Esophagus squamous epithelium (tissue), 5 donors: ENCODE measurements at regions of chr6 and their contacts with region 1.

Region 1: DNA sequence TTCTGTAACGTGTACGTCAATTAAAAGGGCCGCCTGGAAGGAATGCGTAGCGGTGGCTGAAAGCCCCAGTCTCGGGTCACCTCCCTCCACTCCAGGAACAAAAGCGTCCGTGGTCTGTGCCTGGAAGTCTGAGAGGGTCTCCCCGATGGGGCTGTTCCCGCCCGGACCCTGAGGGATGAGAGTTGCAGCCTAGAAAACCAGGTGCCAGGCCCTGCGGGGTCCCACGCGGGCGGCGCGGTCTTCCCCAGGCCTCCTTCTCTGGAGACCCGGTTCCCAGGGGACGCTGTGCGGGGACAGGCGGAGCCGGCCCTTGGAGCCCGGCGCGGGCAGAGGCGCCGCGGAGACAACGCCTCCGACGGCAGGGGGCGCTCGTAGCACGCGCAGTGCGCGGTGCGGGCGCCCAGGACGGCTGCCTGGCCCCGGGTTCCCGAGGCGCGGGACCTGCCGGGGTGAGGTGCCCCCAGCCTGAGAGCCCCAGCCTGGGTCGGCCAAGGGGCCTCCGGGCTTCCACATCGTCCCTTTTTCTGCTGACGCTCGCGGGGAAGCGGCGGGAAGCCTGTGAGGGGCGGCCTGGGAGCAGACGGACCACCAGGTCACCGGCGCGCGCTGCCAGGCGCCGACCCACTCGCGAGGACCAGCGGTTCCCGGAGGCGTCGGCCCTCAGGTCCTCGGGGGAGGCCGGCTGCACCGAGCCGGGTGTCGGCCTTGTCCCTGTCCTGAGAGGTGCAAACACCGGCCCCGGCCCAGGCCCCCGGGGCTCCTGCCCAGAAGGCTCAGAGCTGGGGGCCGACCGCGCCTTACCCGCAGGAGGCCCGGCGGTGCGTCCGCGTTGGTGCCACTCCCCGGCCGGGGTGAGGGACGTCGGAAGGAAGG is 5.3 kb upstream of the FOXC1 start:
- DNase-seq: no peak
- H3K4me3 ChIP-seq: peak overlapping the region; percentile 37 to 72 (median 49)
- H3K27ac ChIP-seq: peak overlapping the region in 2 of 4 donors; percentile 0 to 21
- H3K4me1 ChIP-seq: peaks cover 30 to 59% (median 32%) of the 10 kb centered on the region in 3 donors
- H3K27me3 ChIP-seq: peaks cover 12 to 97% (median 34%) of the 10 kb centered on the region in 4 donors
- CTCF ChIP-seq: peak; percentile 82 to 98 (median 95)
- POLR2A ChIP-seq: no peak

Region 2: GRCh38 chr6:2103644-2104523 is 499.5 kb after region 1 on chr6:
- intact Hi-C with region 1: no loop called
- DNase-seq: no peak
- H3K4me3 ChIP-seq: no peak overlapping the region
- H3K27ac ChIP-seq: peak overlapping the region in 2 of 4 donors; percentile 10 to 12
- H3K4me1 ChIP-seq: peaks cover 0 to 6% (median 0%) of the 10 kb centered on the region in 3 donors
- H3K27me3 ChIP-seq: no peaks in the 10 kb centered on the region
- CTCF ChIP-seq: peak; percentile 16 to 74 (median 43)
- POLR2A ChIP-seq: no peak

Region 3: DNA sequence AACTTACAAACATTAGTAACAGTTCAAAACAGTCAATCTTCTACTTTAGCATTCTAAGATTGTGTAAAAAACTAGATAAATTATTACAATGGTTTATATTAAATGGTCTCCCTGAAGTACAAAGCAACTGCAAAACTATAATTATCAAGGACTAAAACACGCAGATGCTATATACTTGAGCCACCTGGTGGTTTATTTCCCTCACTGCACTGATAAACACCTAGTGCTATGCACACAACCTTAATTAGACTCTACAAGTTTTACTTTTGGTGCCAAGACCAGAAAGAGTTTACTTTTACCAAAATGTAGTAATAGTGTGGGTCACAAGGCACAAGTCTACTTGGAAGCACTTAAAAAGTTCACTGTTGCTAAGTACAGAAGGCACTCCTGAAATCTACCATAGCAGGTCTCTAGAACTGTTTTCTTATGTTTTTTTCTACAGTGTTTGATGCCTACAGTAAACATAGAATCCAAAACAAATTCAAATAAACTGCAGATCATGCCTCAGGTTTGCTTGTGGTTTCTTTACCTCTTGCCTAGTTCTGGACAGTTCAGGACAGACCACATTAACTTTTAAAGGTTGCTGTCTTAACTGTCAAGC is 591.8 kb after region 1 on chr6:
- intact Hi-C with region 1: loop called (anchors 5 kb)
- DNase-seq: no peak
- H3K4me3 ChIP-seq: no peak overlapping the region
- H3K27ac ChIP-seq: no peak overlapping the region
- H3K4me1 ChIP-seq: no peaks in the 10 kb centered on the region
- H3K27me3 ChIP-seq: peaks cover 0 to 18% (median 0%) of the 10 kb centered on the region in 4 donors
- CTCF ChIP-seq: peak; percentile 53 to 88 (median 80)
- POLR2A ChIP-seq: no peak

Region 4: DNA sequence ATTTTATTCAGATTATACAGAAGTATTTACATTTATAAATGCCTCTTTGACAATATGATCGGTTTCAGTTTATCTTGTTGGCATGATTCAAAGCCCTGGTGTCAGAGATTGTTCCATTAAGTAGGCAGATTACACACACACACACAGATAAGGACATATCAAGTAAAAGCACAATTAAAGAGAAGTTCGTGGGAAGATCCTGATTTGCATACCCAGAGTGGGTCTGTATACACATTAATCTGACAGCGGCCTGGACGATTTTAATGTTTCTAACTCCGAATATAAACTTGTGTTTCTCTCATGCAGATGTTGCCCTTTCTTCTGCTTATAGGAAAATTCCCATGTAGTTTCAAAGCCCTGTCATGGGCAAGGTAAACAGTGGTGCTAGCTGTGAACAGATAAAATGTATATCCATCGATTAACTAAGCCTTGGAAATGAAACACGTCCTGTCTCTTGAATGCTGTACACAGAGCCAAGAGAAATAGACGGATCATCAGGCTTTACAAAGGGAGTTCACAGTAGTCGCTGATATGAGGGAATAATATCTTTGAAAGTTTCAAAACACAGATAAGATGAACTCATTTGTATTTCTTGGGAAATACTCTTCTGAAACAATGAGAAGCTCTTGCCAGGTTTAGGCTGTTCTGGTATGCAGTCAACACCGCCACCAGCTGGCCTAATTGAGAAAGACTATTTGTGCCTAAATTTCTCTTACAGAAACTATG is 749.2 kb after region 1 on chr6:
- intact Hi-C with region 1: loop called (anchors 5 kb)
- DNase-seq: no peak
- H3K4me3 ChIP-seq: no peak overlapping the region
- H3K27ac ChIP-seq: no peak overlapping the region
- H3K4me1 ChIP-seq: no peaks in the 10 kb centered on the region
- H3K27me3 ChIP-seq: peaks cover 0 to 29% (median 0%) of the 10 kb centered on the region in 4 donors
- CTCF ChIP-seq: peak in 5 of 6 experiments; percentile 73 to 89 (median 78)
- POLR2A ChIP-seq: no peak

Region 5: GRCh38 chr6:2639896-2640295 is 1035.5 kb after region 1 on chr6:
- intact Hi-C with region 1: loop called (anchors 5 kb)
- DNase-seq: no peak
- H3K4me3 ChIP-seq: no peak overlapping the region
- H3K27ac ChIP-seq: no peak overlapping the region
- H3K4me1 ChIP-seq: peaks cover 0 to 5% (median under 1%) of the 10 kb centered on the region in 3 donors
- H3K27me3 ChIP-seq: peaks cover 0 to 48% (median 0%) of the 10 kb centered on the region in 4 donors
- CTCF ChIP-seq: no peak
- POLR2A ChIP-seq: no peak